ENCODE measurements at regions of chr4 and their contacts with region 1.

Region 1: GRCh38 chr4:128809477-128810330 is at the start of gene JADE1:
- DNase-seq: peak; percentile 95
- H3K4me3 ChIP-seq: peak within 1 kb of the TSS; percentile 75 to 98 (median 95)
- H3K27ac ChIP-seq: peak within 1 kb of the TSS; percentile 94 to 98 (median 96)
- H3K4me1 ChIP-seq: peaks cover 0 to 23% (median 16%) of the 10 kb centered on the region in 4 donors
- H3K27me3 ChIP-seq: no peaks in the 10 kb centered on the region
- CTCF ChIP-seq: peak; percentile 40 to 53 (median 42)
- EP300 ChIP-seq: no peak
- POLR2A ChIP-seq: no peak
- total RNA-seq, gene JADE1: 27.7 to 45.1 (median 37.9) TPM

Region 2: GRCh38 chr4:128060699-128061565 is 748.8 kb before region 1 on chr4 and contains the start of gene LARP1B:
- intact Hi-C with region 1: loop called (anchors 5 kb)
- DNase-seq: peak; percentile 97
- H3K4me3 ChIP-seq: peak within 1 kb of the TSS; percentile 86 to 92 (median 88)
- H3K27ac ChIP-seq: peak within 1 kb of the TSS; percentile 98
- H3K4me1 ChIP-seq: peaks cover 0 to 28% (median 17%) of the 10 kb centered on the region in 4 donors
- H3K27me3 ChIP-seq: no peaks in the 10 kb centered on the region
- CTCF ChIP-seq: no peak
- EP300 ChIP-seq: no peak
- POLR2A ChIP-seq: peak; percentile 50 to 75
- total RNA-seq, gene LARP1B: 18.2 to 30.3 (median 20.3) TPM

Region 3: GRCh38 chr4:128386761-128387599 is 422.7 kb before region 1 on chr4:
- intact Hi-C with region 1: loop called (anchors 2 kb)
- DNase-seq: peak; percentile 98
- H3K4me3 ChIP-seq: no peak overlapping the region
- H3K27ac ChIP-seq: peak overlapping the region; percentile 82 to 88 (median 84)
- H3K4me1 ChIP-seq: peaks cover 0 to 74% (median 67%) of the 10 kb centered on the region in 4 donors
- H3K27me3 ChIP-seq: no peaks in the 10 kb centered on the region
- CTCF ChIP-seq: no peak
- EP300 ChIP-seq: peak; percentile 44 to 87 (median 72)
- POLR2A ChIP-seq: no peak

Region 4: DNA sequence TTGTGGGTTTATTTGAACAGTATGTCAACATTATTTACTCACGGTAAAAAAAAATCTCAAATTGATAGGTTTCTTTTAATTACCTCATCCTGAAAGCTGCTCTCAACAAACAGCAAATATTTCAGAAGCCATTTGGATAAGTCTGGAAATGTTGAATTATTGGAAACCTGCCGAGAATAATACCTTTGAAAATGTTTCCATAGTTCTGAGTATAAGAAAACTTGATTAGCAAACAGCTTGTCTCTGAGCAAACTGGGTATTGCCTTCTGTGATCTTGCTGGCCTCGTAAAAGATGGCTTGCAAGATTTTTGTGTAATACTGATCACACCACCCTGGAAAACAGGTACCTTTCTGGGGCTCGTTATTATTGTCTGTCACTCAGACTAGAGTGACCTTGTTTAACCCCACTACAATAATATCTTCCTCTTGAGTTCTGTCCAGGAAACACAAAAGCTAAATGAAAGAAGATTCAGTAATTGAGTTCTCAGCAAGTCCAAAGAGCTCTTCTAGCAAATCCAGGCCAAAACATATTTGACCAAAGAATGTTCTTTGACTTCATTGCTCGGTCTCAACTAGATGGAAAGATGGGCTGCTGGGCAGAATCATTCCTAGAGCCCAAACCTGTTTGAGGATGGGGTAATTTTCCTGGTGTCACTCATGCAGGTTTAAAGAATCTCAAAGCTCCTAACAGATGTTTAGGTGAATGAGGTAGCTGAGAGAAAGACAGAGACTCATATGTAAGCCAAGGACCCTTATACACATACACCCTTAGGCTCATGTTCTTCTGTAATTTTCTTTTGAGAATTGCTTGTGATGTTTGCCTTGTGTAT is 255.8 kb before region 1 on chr4:
- intact Hi-C with region 1: loop called (anchors 5 kb)
- DNase-seq: no peak
- H3K4me3 ChIP-seq: peak overlapping the region; percentile 45 to 58 (median 56)
- H3K27ac ChIP-seq: peak overlapping the region; percentile 91 to 92 (median 92)
- H3K4me1 ChIP-seq: peaks cover 0 to 30% (median 21%) of the 10 kb centered on the region in 4 donors
- H3K27me3 ChIP-seq: no peaks in the 10 kb centered on the region
- CTCF ChIP-seq: no peak
- EP300 ChIP-seq: no peak
- POLR2A ChIP-seq: no peak

Region 5: GRCh38 chr4:128663336-128663735 is 146.4 kb before region 1 on chr4:
- intact Hi-C with region 1: loop called (anchors 2 kb)
- DNase-seq: no peak
- H3K4me3 ChIP-seq: no peak overlapping the region
- H3K27ac ChIP-seq: no peak overlapping the region
- H3K4me1 ChIP-seq: peaks cover 0 to 50% (median 40%) of the 10 kb centered on the region in 4 donors
- H3K27me3 ChIP-seq: no peaks in the 10 kb centered on the region
- CTCF ChIP-seq: no peak
- EP300 ChIP-seq: no peak
- POLR2A ChIP-seq: no peak

Region 6: DNA sequence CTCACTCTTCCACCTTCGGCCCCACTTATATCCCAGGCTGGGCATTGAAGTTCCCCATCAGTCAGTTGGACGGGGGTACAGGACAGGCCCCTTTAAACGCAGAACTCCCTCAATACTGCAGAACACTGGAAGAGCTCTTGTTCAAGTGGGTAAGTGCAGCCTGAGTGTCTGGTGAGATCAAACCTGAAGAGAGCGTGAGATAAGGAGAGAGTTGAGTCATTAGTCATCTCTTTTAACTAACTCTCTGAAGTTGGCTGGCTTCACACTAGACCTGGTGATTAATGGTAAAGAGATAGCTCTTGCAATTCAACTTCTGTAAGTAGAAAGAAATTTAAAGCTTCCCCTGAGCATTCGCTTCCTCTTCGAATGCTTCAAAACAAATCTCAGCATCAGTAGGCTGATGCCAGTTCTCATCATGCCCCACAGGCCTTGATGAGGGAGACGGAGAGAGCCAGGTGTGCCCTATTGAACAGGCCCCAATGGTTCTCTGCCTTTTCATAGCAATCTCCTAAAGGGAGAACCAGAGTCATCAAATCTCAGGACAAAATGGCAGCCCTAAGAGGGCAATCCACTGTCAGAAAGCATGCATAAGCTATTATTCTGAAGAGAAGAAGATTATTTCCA is 41.2 kb before region 1 on chr4:
- intact Hi-C with region 1: no loop called
- DNase-seq: no peak
- H3K4me3 ChIP-seq: no peak overlapping the region
- H3K27ac ChIP-seq: no peak overlapping the region
- H3K4me1 ChIP-seq: no peaks in the 10 kb centered on the region
- H3K27me3 ChIP-seq: no peaks in the 10 kb centered on the region
- CTCF ChIP-seq: no peak
- EP300 ChIP-seq: no peak
- POLR2A ChIP-seq: no peak

Region 7: GRCh38 chr4:128863312-128864075 is 53.8 kb after region 1 on chr4:
- intact Hi-C with region 1: loop called (anchors 2 kb)
- DNase-seq: peak; percentile 88
- H3K4me3 ChIP-seq: no peak overlapping the region
- H3K27ac ChIP-seq: no peak overlapping the region
- H3K4me1 ChIP-seq: peaks cover 0 to 45% (median 37%) of the 10 kb centered on the region in 4 donors
- H3K27me3 ChIP-seq: no peaks in the 10 kb centered on the region
- CTCF ChIP-seq: peak; percentile 50 to 91 (median 84)
- EP300 ChIP-seq: no peak
- POLR2A ChIP-seq: no peak

Measured in sigmoid colon (tissue), 7 donors.